Mammary epithelial cell (primary cell): ENCODE measurements at regions of chr6 and their contacts with region 1.

Region 1: DNA sequence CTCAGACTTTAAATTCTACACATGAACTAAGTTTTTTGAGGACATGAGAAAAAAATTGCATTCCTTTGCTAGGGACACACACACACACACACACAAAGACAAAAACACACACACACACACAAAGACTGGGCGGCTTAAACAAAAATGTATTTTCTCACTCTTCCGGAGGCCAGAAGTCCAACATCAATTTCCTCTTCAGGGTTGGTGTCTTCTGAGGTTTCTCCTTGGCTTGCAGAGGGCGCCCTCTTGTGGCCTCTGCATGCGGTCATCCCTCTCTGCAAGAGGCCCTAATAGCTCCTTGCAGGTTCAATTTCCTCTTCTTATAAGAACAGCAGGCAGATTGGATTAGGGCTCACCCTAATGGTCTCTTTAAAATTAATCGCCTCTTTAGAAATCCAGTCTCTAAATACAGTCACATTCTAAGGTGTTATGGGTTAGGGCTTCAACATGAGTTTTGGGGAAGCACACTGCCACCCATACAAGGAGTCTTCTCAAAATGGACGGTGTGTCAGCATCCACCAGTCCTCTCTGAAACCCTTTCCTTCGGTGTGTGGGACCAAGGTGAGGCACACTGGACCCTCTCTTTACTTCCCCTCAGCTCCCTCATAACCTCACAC is 61.4 kb downstream of the GPR6 start:
- DNase-seq: peak; percentile 74
- H3K4me3 ChIP-seq: no peak overlapping the region
- H3K27ac ChIP-seq: no peak overlapping the region
- H3K4me1 ChIP-seq: peaks cover 3% of the 10 kb centered on the region
- H3K27me3 ChIP-seq: no peaks in the 10 kb centered on the region
- CTCF ChIP-seq: peak; percentile 88 to 97

Region 2: GRCh38 chr6:109187399-109188114 is 851.9 kb before region 1 on chr6:
- CTCF ChIA-PET with region 1: interaction called, 3 read pairs
- dilution Hi-C with region 1: no loop called
- in situ Hi-C with region 1: no loop called
- intact Hi-C with region 1: loop called (anchors 2 kb)
- DNase-seq: peak; percentile 16
- H3K4me3 ChIP-seq: no peak overlapping the region
- H3K27ac ChIP-seq: no peak overlapping the region
- H3K4me1 ChIP-seq: no peaks in the 10 kb centered on the region
- H3K27me3 ChIP-seq: peaks cover 2% of the 10 kb centered on the region
- CTCF ChIP-seq: peak; percentile 88 to 98

Region 3: DNA sequence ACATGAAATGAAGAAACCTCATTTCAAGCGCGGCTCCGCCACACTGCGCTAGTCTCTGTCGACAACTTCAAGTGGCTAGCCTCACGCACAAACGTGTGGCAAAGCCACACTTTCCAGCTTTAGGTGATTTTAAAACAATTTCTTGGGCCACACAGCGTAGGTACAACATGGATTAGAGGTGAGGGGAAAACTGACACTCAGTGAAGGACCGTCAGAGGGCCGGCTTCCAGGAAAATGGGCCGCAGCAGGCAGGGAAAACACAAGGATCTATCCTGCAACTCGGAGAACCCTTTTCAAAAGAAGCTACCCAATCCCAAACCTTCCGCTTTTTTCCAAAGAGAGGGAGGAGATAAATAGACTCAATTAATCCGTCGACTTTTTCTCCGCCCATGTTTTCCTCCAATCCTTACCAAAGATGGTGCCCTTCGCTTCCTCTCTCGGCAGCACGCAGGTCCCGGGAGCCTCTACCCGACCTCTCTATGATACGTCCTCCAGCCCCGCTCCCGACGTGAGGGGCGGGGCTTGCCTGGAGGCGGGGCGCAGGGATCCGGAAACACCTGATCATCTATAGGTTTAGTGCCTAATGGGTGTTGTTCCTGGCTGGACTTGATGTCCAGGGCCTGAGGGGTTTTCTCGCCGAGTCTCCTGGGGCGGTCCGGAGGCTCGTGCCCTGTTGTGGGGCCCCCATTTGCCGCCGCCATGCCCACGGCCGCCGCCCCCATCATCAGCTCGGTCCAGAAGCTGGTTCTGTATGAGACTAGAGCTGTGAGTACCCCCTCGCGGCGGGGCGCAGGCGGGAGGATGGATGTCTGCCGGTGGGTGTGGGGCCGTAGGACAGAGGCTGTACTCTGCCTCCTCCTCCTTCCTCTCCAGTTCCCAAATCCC is 348.5 kb before region 1 on chr6 and contains the starts of genes AK9 and FIG4:
- CTCF ChIA-PET with region 1: no interaction called
- dilution Hi-C with region 1: no loop called
- in situ Hi-C with region 1: loop called in 1 of 2 experiments (anchors 10 kb)
- intact Hi-C with region 1: no loop called
- DNase-seq: peak; percentile 90
- H3K4me3 ChIP-seq: peak within 1 kb of the TSS; percentile 77 to 94 (median 78)
- H3K27ac ChIP-seq: peak within 1 kb of the TSS; percentile 52
- H3K4me1 ChIP-seq: peaks cover 28% of the 10 kb centered on the region
- H3K27me3 ChIP-seq: no peaks in the 10 kb centered on the region
- CTCF ChIP-seq: peak in 1 of 2 donors; percentile 42
- total RNA-seq, gene AK9: 2.2 to 2.4 TPM
- total RNA-seq, gene FIG4: 12.2 to 17.2 TPM

Region 4: DNA sequence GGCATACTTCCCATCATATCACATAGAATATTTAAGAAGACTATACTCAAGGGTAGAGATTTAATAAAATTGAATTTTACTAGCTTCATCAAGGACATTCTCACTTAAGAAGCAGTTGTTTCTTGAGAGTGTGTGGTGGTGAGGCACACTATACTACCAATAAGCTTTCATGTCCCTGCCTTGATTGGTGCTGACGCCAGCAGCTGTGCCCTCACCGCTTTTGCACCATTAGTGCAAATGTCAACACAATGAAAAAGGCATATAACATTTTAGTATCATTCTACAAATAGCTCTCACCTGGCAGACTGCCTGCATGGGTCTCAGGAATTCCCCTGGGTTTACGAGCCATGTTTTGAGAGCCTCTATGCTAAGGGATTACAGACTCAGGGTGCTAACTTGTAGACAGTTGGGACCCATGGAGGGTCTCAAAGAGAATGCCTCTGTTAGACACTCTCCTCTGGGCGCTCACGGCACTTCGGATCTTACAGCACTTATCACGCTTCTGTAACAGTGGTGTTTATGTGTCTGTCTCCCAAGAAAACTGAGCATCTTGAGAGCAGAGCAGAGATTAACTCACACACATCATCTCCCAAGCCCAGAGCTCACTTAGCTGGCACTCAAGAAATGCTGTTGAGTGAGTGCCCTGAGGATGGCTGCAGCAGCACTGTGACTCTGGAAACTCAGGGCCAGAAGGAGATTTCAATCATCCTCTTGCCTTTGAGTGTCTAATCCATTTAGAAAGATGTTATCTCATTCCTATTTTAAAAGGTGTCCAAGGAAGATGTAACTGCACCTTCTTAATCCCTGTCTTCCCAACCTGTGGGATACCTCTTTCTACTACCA is 204.7 kb before region 1 on chr6:
- CTCF ChIA-PET with region 1: no interaction called
- dilution Hi-C with region 1: no loop called
- in situ Hi-C with region 1: no loop called
- intact Hi-C with region 1: loop called (anchors 5 kb)
- DNase-seq: no peak
- H3K4me3 ChIP-seq: no peak overlapping the region
- H3K27ac ChIP-seq: no peak overlapping the region
- H3K4me1 ChIP-seq: no peaks in the 10 kb centered on the region
- H3K27me3 ChIP-seq: no peaks in the 10 kb centered on the region
- CTCF ChIP-seq: no peak

Region 5: DNA sequence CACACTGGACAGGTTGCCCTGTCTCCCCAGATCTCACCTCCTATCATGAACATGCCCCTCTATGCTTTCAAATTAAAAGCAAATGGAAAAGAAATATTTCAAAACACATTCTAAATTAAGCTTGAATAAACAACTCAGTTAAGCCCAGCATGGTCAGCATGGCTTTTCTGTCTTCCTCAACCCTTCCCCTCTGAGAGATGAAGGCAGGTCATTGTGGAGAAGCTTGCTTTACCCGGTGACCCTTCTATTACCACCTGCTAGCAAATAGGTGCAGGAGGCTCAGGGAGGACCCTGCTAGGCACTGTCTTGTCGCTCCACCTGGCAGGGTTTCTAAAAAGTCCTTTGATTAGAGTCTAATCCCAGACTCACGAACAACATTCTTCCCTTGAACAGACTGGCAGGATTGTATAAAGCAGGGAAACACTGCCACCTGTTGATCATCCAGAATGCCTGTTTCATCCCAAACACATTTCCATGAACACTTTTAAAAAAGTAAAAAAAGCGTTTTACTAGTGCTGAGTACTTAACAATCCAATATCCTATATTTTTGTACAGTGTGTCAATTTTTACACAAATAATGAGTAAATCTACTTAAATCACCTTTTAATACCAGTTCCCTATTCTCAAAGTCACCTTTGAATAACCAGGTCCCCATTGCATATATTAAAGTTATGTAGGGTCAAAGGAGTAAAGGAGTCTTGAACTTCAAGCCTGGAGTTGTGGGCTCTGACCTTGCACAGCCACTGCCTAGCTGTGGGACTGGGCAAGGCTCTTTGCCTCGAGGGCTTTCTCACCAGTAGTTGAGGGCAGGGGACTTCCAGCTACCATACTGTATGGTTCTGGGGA is 14.1 kb after region 1 on chr6:
- CTCF ChIA-PET with region 1: interaction called, 24 read pairs
- dilution Hi-C with region 1: no loop called
- in situ Hi-C with region 1: no loop called
- intact Hi-C with region 1: loop called (anchors 1 kb)
- DNase-seq: peak; percentile 29
- H3K4me3 ChIP-seq: no peak overlapping the region
- H3K27ac ChIP-seq: no peak overlapping the region
- H3K4me1 ChIP-seq: no peaks in the 10 kb centered on the region
- H3K27me3 ChIP-seq: peaks cover 7% of the 10 kb centered on the region
- CTCF ChIP-seq: peak; percentile 77 to 78

Region 6: GRCh38 chr6:110398778-110399177 is 359.3 kb after region 1 on chr6:
- CTCF ChIA-PET with region 1: no interaction called
- dilution Hi-C with region 1: no loop called
- in situ Hi-C with region 1: loop called in 1 of 2 experiments (anchors 10 kb)
- intact Hi-C with region 1: no loop called
- DNase-seq: peak; percentile 23
- H3K4me3 ChIP-seq: no peak overlapping the region
- H3K27ac ChIP-seq: no peak overlapping the region
- H3K4me1 ChIP-seq: peaks cover 11% of the 10 kb centered on the region
- H3K27me3 ChIP-seq: no peaks in the 10 kb centered on the region
- CTCF ChIP-seq: no peak